ENCODE measurements at regions of chr14 and their contacts with region 1.

Region 1: DNA sequence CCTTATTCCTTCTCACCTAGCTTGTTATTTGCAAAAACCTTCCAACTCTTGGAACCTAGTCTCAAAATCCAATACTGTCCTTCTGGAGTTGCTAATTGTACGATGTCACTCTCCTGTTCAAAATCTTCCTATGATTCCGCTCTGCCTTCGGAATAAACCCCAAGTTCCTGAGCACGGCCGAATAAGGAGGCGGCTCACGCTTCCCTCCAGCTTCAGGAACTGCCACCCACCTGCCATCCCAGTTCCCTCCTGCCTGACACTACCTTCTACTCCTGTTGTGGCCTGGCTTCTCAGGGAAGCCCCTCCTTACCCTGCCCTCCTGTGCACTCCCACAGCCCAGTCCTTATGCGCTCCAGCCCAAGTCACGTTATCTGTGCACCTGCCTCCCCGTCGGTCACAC is 73.2 kb downstream of the SETD3 start:
- DNase-seq: no peak

Region 2: GRCh38 chr14:99327844-99328255 is 79.6 kb before region 1 on chr14:
- intact Hi-C with region 1: loop called in 1 of 2 experiments (anchors 2 kb)
- DNase-seq: peak; percentile 14

Region 3: GRCh38 chr14:99706107-99706900 is 298.9 kb after region 1 on chr14:
- intact Hi-C with region 1: no loop called
- DNase-seq: peak; percentile 42